ENCODE measurements at regions of chr12 and their contacts with region 1.

Region 1: GRCh38 chr12:38350342-38351174 is 34.0 kb downstream of the ALG10B start:
- DNase-seq: no peak
- H3K4me3 ChIP-seq: no peak overlapping the region
- H3K27ac ChIP-seq: no peak overlapping the region
- H3K4me1 ChIP-seq: no peaks in the 10 kb centered on the region
- H3K27me3 ChIP-seq: no peaks in the 10 kb centered on the region
- CTCF ChIP-seq: no peak

Region 2: DNA sequence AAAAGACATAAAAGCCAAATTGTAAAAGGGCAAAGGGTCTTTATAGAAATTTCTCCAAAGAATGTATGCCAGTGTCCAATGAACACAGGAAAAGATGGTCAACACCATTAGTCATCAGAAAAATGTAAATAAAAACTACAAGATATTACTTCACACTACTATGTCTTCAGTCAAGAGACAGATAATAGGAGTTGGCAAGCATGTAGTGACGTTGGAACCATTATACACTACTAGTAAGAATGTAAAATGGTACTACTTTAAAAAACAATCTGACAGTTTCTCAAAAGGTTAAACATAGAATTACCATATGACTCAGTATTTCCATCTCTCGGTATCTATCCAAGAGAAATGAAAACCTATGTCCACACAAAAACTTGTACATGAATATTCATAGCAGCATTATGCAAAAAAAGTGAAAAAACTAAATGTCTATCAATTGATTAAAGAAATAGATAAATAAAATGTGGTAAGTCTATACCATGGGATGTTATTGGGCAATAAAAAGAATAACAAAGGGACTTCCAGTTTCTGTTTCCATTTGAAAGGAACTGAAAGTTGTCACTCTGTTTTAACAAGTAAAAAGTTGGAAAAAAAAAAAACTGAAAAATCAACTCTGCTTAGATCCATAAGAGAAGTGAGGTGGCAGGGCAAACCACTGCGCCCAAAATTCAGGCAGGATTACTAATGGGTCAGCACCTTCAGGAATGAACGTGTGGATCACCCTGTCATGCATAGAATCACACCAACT is 35.9 kb after region 1 on chr12:
- CTCF ChIA-PET with region 1: no interaction called
- POLR2A ChIA-PET with region 1: no interaction called
- intact Hi-C with region 1: no loop called
- DNase-seq: no peak
- H3K4me3 ChIP-seq: no peak overlapping the region
- H3K27ac ChIP-seq: no peak overlapping the region
- H3K4me1 ChIP-seq: no peaks in the 10 kb centered on the region
- H3K27me3 ChIP-seq: no peaks in the 10 kb centered on the region
- CTCF ChIP-seq: no peak

Region 3: GRCh38 chr12:38411426-38411825 is 60.9 kb after region 1 on chr12:
- CTCF ChIA-PET with region 1: no interaction called
- POLR2A ChIA-PET with region 1: no interaction called
- intact Hi-C with region 1: loop called (anchors 10 kb)
- DNase-seq: no peak
- H3K4me3 ChIP-seq: no peak overlapping the region
- H3K27ac ChIP-seq: no peak overlapping the region
- H3K4me1 ChIP-seq: no peaks in the 10 kb centered on the region
- H3K27me3 ChIP-seq: no peaks in the 10 kb centered on the region
- CTCF ChIP-seq: no peak

Measured in A673 (cell line).